Thyroid gland (tissue), 4 donors: ENCODE measurements at regions of chr19 and their contacts with region 1.

Region 1: GRCh38 chr19:39125554-39126311 is at the start of gene PAK4:
- DNase-seq: peak; percentile 99
- H3K4me3 ChIP-seq: peak within 1 kb of the TSS; percentile 22 to 82 (median 32)
- H3K27ac ChIP-seq: peak within 1 kb of the TSS; percentile 55 to 82 (median 71)
- H3K4me1 ChIP-seq: peaks cover 32 to 46% of the 10 kb centered on the region in 2 donors
- H3K27me3 ChIP-seq: no peaks in the 10 kb centered on the region
- CTCF ChIP-seq: no peak
- POLR2A ChIP-seq: peak in 1 of 2 donors; percentile 84
- total RNA-seq, gene PAK4: 12.4 to 24.9 (median 23.2) TPM

Region 2: DNA sequence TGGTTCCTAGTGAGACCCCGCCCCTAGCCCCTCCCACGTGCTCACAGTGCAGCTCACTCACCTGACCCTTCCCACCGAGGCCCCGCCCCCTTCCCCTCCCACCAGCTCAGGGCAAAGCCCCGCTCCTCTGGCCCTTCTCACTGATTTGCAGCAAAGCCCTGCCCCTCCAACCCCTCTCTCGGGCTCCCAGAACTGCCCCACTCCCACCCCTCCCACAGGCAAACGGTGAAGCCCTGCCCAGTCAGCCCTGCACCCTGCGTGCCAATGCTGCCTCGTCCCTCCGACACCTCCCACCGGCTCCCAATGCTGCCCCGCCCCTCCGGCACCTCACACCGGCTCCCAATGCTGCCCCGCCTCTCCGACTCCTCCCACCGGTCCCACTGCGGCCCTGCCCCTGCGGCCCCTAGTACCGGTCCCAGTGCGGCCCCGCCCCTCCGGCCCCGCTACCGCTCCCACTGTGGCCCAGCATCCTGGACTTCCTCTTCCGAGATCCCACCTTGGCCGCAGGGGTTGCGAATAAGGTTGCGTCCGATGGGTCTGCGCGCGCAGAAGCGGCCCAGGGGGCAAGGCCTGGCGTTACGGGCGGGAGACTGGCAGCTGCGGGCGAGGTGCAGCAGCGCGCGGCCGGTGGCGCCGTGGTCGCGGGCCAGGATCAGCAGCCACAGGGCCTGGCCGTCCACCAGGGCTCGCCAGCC is 94.2 kb before region 1 on chr19:
- intact Hi-C with region 1: no loop called
- DNase-seq: peak; percentile 93 to 96
- H3K4me3 ChIP-seq: peak overlapping the region; percentile 3 to 46 (median 18)
- H3K27ac ChIP-seq: peak overlapping the region in 1 of 3 donors; percentile 19
- H3K4me1 ChIP-seq: peaks cover 11 to 15% of the 10 kb centered on the region in 2 donors
- H3K27me3 ChIP-seq: no peaks in the 10 kb centered on the region
- CTCF ChIP-seq: no peak
- POLR2A ChIP-seq: peak in 1 of 2 donors; percentile 47

Region 3: GRCh38 chr19:39170395-39171231 is 44.9 kb after region 1 on chr19:
- intact Hi-C with region 1: loop called (anchors 5 kb)
- DNase-seq: no peak
- H3K4me3 ChIP-seq: no peak overlapping the region
- H3K27ac ChIP-seq: no peak overlapping the region
- H3K4me1 ChIP-seq: peaks cover 22 to 31% of the 10 kb centered on the region in 2 donors
- H3K27me3 ChIP-seq: no peaks in the 10 kb centered on the region
- CTCF ChIP-seq: no peak
- POLR2A ChIP-seq: no peak

Region 4: GRCh38 chr19:39187559-39187957 is 61.8 kb after region 1 on chr19:
- intact Hi-C with region 1: loop called (anchors 5 kb)
- DNase-seq: no peak
- H3K4me3 ChIP-seq: no peak overlapping the region
- H3K27ac ChIP-seq: no peak overlapping the region
- H3K4me1 ChIP-seq: no peaks in the 10 kb centered on the region
- H3K27me3 ChIP-seq: no peaks in the 10 kb centered on the region
- CTCF ChIP-seq: peak in 1 of 6 experiments; percentile 10
- POLR2A ChIP-seq: no peak